ENCODE measurements at regions of chr20 and their contacts with region 1.

Region 1: GRCh38 chr20:37192137-37192854 is 12.9 kb upstream of the MROH8 start:
- DNase-seq: peak; percentile 88
- H3K4me3 ChIP-seq: no peak overlapping the region
- H3K27ac ChIP-seq: no peak overlapping the region
- H3K4me1 ChIP-seq: peaks cover 11 to 98% (median 57%) of the 10 kb centered on the region in 6 donors
- H3K27me3 ChIP-seq: no peaks in the 10 kb centered on the region
- CTCF ChIP-seq: peak in 10 of 11 experiments; percentile 50 to 93 (median 86)
- POLR2A ChIP-seq: no peak

Region 2: GRCh38 chr20:37527638-37528441 is 335.5 kb after region 1 on chr20 and contains the start of gene BLCAP:
- intact Hi-C with region 1: loop called (anchors 5 kb)
- DNase-seq: peak; percentile 97
- H3K4me3 ChIP-seq: peak within 1 kb of the TSS; percentile 95 to 100 (median 98)
- H3K27ac ChIP-seq: peak within 1 kb of the TSS; percentile 93 to 99 (median 98)
- H3K4me1 ChIP-seq: peaks cover 16 to 59% (median 43%) of the 10 kb centered on the region in 6 donors
- H3K27me3 ChIP-seq: no peaks in the 10 kb centered on the region
- CTCF ChIP-seq: no peak
- POLR2A ChIP-seq: peak; percentile 7 to 82 (median 48)
- total RNA-seq, gene BLCAP: 62.5 to 94.7 (median 69.5) TPM

Measured in spleen (tissue), 13 donors.